Tibial artery (tissue), 4 donors: ENCODE measurements at regions of chr6 and their contacts with region 1.

Region 1: DNA sequence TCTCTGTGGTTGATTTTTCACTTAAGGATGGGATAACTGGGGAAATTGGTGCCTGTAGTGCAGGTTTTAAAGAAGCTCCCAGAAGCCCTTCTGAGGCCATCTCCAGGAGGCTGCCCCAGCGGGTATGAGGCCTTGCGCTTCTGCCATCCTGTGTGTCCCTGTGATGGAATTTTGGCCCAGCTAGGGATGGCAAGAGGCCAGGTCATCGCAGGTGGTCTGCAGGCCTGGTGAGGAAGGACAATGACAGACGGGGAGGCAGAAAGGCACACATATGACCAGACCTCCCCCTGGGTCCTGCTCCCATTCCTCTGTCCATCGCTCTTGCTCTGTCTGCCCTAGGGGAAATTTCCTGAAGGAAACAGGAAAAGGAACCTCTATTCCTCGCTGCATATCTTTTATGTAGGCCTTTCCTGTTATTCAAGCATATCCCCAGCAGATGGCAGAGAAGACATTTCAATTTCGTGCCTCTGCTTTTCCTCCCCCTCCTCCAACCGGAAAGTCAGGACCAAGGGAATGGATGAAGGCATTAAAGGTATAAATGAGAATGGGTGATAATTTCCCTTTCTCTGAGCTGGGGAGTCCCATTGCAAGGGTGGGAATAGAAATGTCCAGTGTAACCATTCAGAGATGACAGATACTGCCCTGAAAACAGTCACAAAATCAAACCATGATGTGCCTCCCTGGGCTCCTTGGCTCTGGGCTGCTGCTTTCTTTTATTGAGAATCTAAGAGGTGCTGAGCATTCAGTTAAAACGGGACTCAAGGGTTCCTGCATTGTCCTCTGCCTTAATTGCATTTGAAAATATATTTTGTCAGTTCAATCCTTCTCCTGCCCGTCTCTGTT is 17.6 kb upstream of the HLA-F start:
- DNase-seq: no peak
- H3K4me3 ChIP-seq: no peak overlapping the region
- H3K27ac ChIP-seq: no peak overlapping the region
- H3K4me1 ChIP-seq: no peaks in the 10 kb centered on the region
- H3K27me3 ChIP-seq: peaks cover 0 to 40% of the 10 kb centered on the region in 2 donors
- CTCF ChIP-seq: peak; percentile 37 to 54

Region 2: DNA sequence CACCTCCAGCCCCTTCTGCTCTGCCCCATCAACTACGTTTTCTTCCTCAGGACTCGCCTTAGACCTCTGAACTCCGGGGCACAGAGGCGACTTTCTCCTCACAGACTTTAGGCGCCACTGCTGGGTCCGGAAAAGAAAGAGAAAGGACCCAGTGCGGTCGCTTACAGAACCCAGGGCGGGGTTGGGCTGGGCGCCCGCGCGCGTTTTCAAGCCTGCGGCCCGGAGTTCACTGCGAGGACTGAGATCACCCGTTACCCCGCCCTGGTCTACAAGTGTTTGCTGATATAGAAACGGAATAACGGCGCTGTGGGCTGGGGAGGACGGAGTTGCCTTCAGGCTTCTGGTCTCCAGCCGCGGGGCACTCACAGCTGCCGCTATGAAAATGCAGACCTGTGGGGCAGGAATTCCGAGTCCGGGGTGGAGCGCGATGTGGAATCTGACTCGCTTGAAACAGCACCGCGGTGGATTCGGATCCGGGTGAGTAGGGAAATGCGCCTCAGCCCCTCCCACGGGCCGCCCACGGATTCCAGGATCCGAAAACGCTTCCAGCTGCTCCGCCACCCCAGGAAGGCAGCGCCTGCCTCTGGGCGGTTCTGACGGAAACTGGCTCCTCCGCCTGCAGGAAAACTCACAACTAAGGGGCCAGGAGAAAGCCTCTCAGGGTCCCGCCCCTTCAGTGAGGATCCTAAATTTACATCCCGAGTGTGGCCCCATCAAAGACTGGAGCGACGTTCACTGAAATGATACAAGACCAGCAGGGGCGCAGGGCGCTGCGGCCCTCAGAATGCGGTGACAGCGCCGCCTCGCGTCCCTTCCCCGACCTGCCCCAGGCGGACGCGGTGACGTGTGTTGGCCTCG is 47.1 kb after region 1 on chr6:
- intact Hi-C with region 1: loop called (anchors 10 kb)
- DNase-seq: peak; percentile 91 to 95
- H3K4me3 ChIP-seq: peak overlapping the region; percentile 69 to 70
- H3K27ac ChIP-seq: peak overlapping the region; percentile 91 to 92
- H3K4me1 ChIP-seq: peaks cover 0 to 34% (median 24%) of the 10 kb centered on the region in 4 donors
- H3K27me3 ChIP-seq: peaks cover 0 to 5% of the 10 kb centered on the region in 2 donors
- CTCF ChIP-seq: peak; percentile 95 to 97

Region 3: DNA sequence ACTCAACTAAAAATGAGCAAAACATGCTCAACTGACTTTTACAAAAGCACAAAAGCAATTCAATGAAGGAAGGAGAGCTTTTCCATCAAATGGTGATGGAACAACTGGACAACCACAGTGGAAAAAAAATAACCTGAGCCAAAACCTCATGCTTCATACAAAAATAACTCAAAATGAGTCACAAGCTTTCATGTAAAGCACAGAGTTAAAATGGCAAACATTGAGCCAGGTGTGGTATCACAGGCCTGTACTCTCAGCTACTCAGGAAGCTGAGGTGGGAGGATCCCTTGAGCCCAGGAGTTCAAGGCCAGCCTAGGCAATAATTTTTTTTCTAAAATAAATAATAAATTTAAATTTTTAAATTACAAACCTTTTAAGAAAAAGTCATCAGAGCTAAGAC is 103.6 kb after region 1 on chr6:
- intact Hi-C with region 1: no loop called
- DNase-seq: no peak
- H3K4me3 ChIP-seq: no peak overlapping the region
- H3K27ac ChIP-seq: no peak overlapping the region
- H3K4me1 ChIP-seq: no peaks in the 10 kb centered on the region
- H3K27me3 ChIP-seq: peaks cover 0 to 5% of the 10 kb centered on the region in 2 donors
- CTCF ChIP-seq: no peak

Region 4: GRCh38 chr6:29834564-29835436 is 129.2 kb after region 1 on chr6:
- intact Hi-C with region 1: loop called (anchors 5 kb)
- DNase-seq: no peak
- H3K4me3 ChIP-seq: no peak overlapping the region
- H3K27ac ChIP-seq: no peak overlapping the region
- H3K4me1 ChIP-seq: no peaks in the 10 kb centered on the region
- H3K27me3 ChIP-seq: peaks cover 0 to 40% of the 10 kb centered on the region in 2 donors
- CTCF ChIP-seq: peak; percentile 44 to 71